ENCODE measurements at regions of chr2 and their contacts with region 1.

Region 1: GRCh38 chr2:199704358-199705238 is 146.4 kb downstream of the FTCDNL1 start:
- DNase-seq: no peak
- H3K4me3 ChIP-seq: no peak overlapping the region
- H3K27ac ChIP-seq: no peak overlapping the region
- H3K4me1 ChIP-seq: no peaks in the 10 kb centered on the region
- H3K27me3 ChIP-seq: no peaks in the 10 kb centered on the region
- CTCF ChIP-seq: peak in 5 of 6 experiments; percentile 47 to 68 (median 58)
- POLR2A ChIP-seq: no peak

Region 2: GRCh38 chr2:199757233-199757870 is 52.8 kb after region 1 on chr2:
- intact Hi-C with region 1: no loop called
- DNase-seq: no peak
- H3K4me3 ChIP-seq: no peak overlapping the region
- H3K27ac ChIP-seq: peak overlapping the region in 1 of 4 donors; percentile 36
- H3K4me1 ChIP-seq: peaks cover 0 to 14% (median 6%) of the 10 kb centered on the region in 3 donors
- H3K27me3 ChIP-seq: no peaks in the 10 kb centered on the region
- CTCF ChIP-seq: no peak
- POLR2A ChIP-seq: no peak

Region 3: GRCh38 chr2:199855812-199856211 is 151.2 kb after region 1 on chr2:
- intact Hi-C with region 1: loop called (anchors 5 kb)
- DNase-seq: no peak
- H3K4me3 ChIP-seq: no peak overlapping the region
- H3K27ac ChIP-seq: no peak overlapping the region
- H3K4me1 ChIP-seq: peaks cover 0 to 9% (median 0%) of the 10 kb centered on the region in 3 donors
- H3K27me3 ChIP-seq: peaks cover 0 to 17% (median 0%) of the 10 kb centered on the region in 4 donors
- CTCF ChIP-seq: no peak
- POLR2A ChIP-seq: no peak

Region 4: DNA sequence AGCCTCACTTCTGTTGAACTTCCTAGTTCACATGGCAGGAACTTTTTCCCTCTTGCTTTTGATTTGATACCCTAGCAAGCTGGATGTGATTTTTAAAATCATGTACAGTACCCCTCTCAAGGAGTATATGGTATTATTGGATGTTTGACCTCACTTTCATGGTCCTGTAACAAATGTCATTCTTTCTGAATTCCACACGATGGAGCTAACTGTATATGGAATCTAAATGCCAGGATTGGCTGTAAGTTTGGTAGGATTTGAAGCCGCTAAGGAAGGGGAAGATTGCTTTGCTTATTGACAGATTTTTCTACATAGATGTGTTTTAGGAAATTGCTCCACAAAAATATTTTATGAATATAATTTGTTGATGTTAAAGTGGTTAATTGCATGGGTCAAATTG is 269.1 kb after region 1 on chr2:
- intact Hi-C with region 1: no loop called
- DNase-seq: no peak
- H3K4me3 ChIP-seq: no peak overlapping the region
- H3K27ac ChIP-seq: no peak overlapping the region
- H3K4me1 ChIP-seq: peaks cover 0 to 11% (median 4%) of the 10 kb centered on the region in 3 donors
- H3K27me3 ChIP-seq: no peaks in the 10 kb centered on the region
- CTCF ChIP-seq: peak; percentile 20 to 63 (median 39)
- POLR2A ChIP-seq: no peak

Region 5: GRCh38 chr2:200352636-200353035 is 648.0 kb after region 1 on chr2:
- intact Hi-C with region 1: no loop called
- DNase-seq: no peak
- H3K4me3 ChIP-seq: no peak overlapping the region
- H3K27ac ChIP-seq: peak overlapping the region in 3 of 4 donors; percentile 27 to 65 (median 38)
- H3K4me1 ChIP-seq: peaks cover 17 to 75% (median 47%) of the 10 kb centered on the region in 3 donors
- H3K27me3 ChIP-seq: no peaks in the 10 kb centered on the region
- CTCF ChIP-seq: no peak
- POLR2A ChIP-seq: no peak

Measured in esophagus squamous epithelium (tissue), 5 donors.